Stomach (tissue), 19 donors: ENCODE measurements at regions of chr6 and their contacts with region 1.

Region 1: GRCh38 chr6:56699066-56699654 is 56.5 kb upstream of the DST start:
- DNase-seq: peak in 1 of 2 donors; percentile 45
- H3K4me3 ChIP-seq: no peak overlapping the region
- H3K27ac ChIP-seq: no peak overlapping the region
- H3K4me1 ChIP-seq: peaks cover 0 to 6% (median 0%) of the 10 kb centered on the region in 4 donors
- H3K27me3 ChIP-seq: no peaks in the 10 kb centered on the region
- CTCF ChIP-seq: peak in 4 of 7 experiments; percentile 14 to 49 (median 46)
- EP300 ChIP-seq: no peak
- POLR2A ChIP-seq: no peak

Region 2: GRCh38 chr6:56618050-56618449 is 81.1 kb before region 1 on chr6:
- intact Hi-C with region 1: no loop called
- DNase-seq: no peak
- H3K4me3 ChIP-seq: no peak overlapping the region
- H3K27ac ChIP-seq: no peak overlapping the region
- H3K4me1 ChIP-seq: no peaks in the 10 kb centered on the region
- H3K27me3 ChIP-seq: no peaks in the 10 kb centered on the region
- CTCF ChIP-seq: no peak
- EP300 ChIP-seq: no peak
- POLR2A ChIP-seq: no peak

Region 3: GRCh38 chr6:56808871-56809359 is 109.8 kb after region 1 on chr6:
- intact Hi-C with region 1: no loop called
- DNase-seq: no peak
- H3K4me3 ChIP-seq: no peak overlapping the region
- H3K27ac ChIP-seq: no peak overlapping the region
- H3K4me1 ChIP-seq: peaks cover 0 to 9% (median 0%) of the 10 kb centered on the region in 4 donors
- H3K27me3 ChIP-seq: no peaks in the 10 kb centered on the region
- CTCF ChIP-seq: no peak
- EP300 ChIP-seq: no peak
- POLR2A ChIP-seq: no peak

Region 4: GRCh38 chr6:56843573-56844349 is 144.6 kb after region 1 on chr6:
- intact Hi-C with region 1: loop called (anchors 10 kb)
- DNase-seq: peak; percentile 43 to 95
- H3K4me3 ChIP-seq: peak overlapping the region; percentile 65 to 85 (median 72)
- H3K27ac ChIP-seq: peak overlapping the region; percentile 52 to 91 (median 85)
- H3K4me1 ChIP-seq: peaks cover 8 to 44% (median 24%) of the 10 kb centered on the region in 4 donors
- H3K27me3 ChIP-seq: peaks cover 0 to 46% (median 21%) of the 10 kb centered on the region in 3 donors
- CTCF ChIP-seq: peak in 4 of 7 experiments; percentile 18 to 34 (median 30)
- EP300 ChIP-seq: no peak
- POLR2A ChIP-seq: no peak